ENCODE measurements at regions of chr7 and their contacts with region 1.

Region 1: DNA sequence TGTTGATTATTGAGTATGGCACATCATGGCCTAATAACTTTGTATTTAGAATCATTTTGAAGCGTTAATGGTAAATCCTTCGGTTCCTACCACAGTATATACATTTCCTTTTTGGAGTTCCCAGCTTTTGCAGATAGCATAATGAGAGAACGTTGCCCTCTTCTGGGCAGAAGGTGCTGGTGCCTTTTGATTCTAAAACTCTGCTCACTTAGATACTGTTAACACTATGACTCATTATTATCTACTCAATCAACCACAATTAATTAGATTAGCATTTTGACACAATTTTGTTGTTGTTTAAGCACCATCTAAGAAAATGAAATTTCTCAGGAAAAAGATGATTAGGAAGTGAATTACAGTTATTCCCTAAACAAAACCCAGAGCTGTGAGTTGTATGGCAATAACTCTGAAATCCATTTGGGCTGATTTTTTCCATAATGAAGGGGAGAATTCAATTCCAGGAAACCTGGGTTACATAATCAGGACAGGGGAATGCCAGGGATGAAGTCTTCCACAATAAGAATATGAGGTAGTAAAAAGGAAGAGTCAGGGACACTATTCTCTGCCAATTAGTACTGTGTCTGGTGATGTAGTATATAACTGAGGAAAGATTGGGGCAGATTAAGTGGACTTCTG is 11.5 kb upstream of the DLD start:
- DNase-seq: peak; percentile 71
- H3K4me3 Mint-ChIP-seq: no peak overlapping the region
- H3K27ac Mint-ChIP-seq: no peak overlapping the region
- H3K4me1 Mint-ChIP-seq: no peaks in the 10 kb centered on the region
- H3K27me3 Mint-ChIP-seq: peaks cover 33% of the 10 kb centered on the region
- CTCF ChIP-seq: peak; percentile 54

Region 2: DNA sequence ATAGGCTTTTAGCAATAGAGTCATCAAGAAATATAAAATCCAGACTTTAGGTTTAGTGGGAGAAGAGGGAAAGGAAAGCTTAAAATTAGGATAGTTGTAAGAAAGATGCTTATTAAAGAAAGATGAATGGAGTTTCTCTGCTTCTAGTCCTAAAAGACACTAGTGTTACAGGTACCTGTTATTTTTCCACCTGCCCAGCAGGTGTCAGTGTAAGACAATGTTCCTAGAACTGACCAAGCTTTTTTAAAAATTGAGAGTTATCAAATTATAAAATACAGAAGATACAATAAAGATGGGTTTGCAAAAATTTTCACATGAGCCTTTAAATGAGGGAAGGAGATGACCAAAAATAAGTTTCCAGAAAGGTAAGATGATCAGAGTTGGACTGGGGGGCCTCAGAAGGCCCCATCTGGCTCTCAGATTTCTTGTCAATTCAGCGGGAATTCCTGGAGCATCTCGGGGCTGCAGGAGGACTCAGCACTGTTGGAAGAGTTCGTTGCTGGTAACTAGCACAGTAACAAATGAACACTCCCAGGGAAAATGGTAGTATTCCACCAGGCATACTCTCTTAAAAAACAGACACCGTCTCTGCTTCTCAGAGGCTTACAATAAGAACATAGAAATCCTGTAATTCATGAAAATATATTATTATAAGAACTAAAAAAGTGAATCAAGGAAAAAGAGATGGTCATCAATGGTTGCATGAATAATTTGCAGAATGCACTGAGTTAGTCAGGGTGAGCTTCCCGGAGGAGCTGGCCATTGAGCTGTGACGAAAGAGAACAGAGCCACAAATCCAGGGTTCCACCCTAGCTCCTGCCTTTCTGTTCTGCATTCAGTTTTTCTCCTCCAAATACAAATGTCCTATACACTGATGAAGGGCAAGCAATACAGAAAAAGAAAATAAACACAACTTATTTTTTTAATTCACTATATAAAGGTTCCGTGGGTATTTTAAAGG is 1086.2 kb before region 1 on chr7:
- CTCF ChIA-PET with region 1: interaction called, 5 read pairs
- POLR2A ChIA-PET with region 1: no interaction called
- intact Hi-C with region 1: loop called (anchors 5 kb)
- DNase-seq: peak; percentile 54
- H3K4me3 Mint-ChIP-seq: no peak overlapping the region
- H3K27ac Mint-ChIP-seq: no peak overlapping the region
- H3K4me1 Mint-ChIP-seq: no peaks in the 10 kb centered on the region
- H3K27me3 Mint-ChIP-seq: peaks cover 42% of the 10 kb centered on the region
- CTCF ChIP-seq: peak; percentile 77

Region 3: GRCh38 chr7:107150375-107151073 is 729.0 kb before region 1 on chr7:
- CTCF ChIA-PET with region 1: interaction called, 5 read pairs
- POLR2A ChIA-PET with region 1: no interaction called
- intact Hi-C with region 1: loop called (anchors 2 kb)
- DNase-seq: peak; percentile 71
- H3K4me3 Mint-ChIP-seq: no peak overlapping the region
- H3K27ac Mint-ChIP-seq: no peak overlapping the region
- H3K4me1 Mint-ChIP-seq: peaks cover 12% of the 10 kb centered on the region
- H3K27me3 Mint-ChIP-seq: no peaks in the 10 kb centered on the region
- CTCF ChIP-seq: peak; percentile 59

Region 4: DNA sequence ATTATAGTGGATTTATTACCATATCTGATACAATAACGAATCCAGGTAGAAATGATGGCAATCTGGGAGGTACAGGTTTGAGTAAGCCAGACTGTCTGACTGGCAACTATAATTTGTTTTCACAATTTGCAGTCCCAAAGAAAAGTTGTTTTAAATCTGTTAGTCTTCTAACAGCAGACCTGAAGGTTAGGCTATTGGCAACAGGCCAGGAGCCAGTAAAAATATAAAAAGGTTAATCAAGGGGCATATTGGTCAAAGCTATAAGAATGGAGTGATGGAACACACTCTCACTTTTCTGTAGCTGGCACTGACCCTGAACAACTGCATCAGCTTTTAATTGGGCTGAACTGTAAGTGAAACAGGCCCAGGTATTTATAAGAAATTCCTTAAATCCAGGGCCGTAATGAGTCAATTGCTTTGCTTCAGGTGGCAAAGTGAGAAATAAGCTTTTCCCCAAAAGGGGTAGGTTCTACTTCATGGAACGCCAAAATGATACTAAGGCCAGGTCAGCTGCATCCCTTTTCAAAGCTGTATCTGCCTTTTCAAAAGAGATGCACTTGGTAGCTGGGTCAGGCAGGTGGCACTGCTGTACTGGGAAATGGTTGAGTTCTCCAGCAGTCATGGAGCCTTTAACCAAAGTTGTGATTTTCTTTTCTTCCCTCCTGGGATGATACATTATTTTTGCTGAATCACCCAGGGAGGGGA is 416.6 kb before region 1 on chr7:
- CTCF ChIA-PET with region 1: interaction called, 31 read pairs
- POLR2A ChIA-PET with region 1: interaction called, 6 read pairs
- intact Hi-C with region 1: loop called (anchors 1 kb)
- DNase-seq: peak; percentile 78
- H3K4me3 Mint-ChIP-seq: no peak overlapping the region
- H3K27ac Mint-ChIP-seq: no peak overlapping the region
- H3K4me1 Mint-ChIP-seq: peaks cover 5% of the 10 kb centered on the region
- H3K27me3 Mint-ChIP-seq: no peaks in the 10 kb centered on the region
- CTCF ChIP-seq: peak; percentile 82

Region 5: GRCh38 chr7:107743567-107744344 is 135.8 kb before region 1 on chr7 and contains the start of gene CBLL1:
- CTCF ChIA-PET with region 1: interaction called, 227 read pairs
- POLR2A ChIA-PET with region 1: interaction called, 93 read pairs
- intact Hi-C with region 1: loop called (anchors 1 kb)
- DNase-seq: peak; percentile 92
- H3K4me3 Mint-ChIP-seq: peak within 1 kb of the TSS; percentile 94
- H3K27ac Mint-ChIP-seq: peak within 1 kb of the TSS; percentile 97
- H3K4me1 Mint-ChIP-seq: peaks cover 21% of the 10 kb centered on the region
- H3K27me3 Mint-ChIP-seq: no peaks in the 10 kb centered on the region
- CTCF ChIP-seq: peak; percentile 58
- total RNA-seq, gene CBLL1: 34.5 and 39.7 TPM in 2 replicates

Region 6: GRCh38 chr7:107890962-107891635 is 11.6 kb after region 1 on chr7 and contains the start of gene DLD:
- CTCF ChIA-PET with region 1: interaction called, 35 read pairs
- POLR2A ChIA-PET with region 1: interaction called, 7 read pairs
- intact Hi-C with region 1: no loop called
- DNase-seq: peak; percentile 88
- H3K4me3 Mint-ChIP-seq: peak within 1 kb of the TSS; percentile 86
- H3K27ac Mint-ChIP-seq: peak within 1 kb of the TSS; percentile 95
- H3K4me1 Mint-ChIP-seq: peaks cover 26% of the 10 kb centered on the region
- H3K27me3 Mint-ChIP-seq: peaks cover 2% of the 10 kb centered on the region
- CTCF ChIP-seq: no peak
- total RNA-seq, gene DLD: 83.0 and 85.7 TPM in 2 replicates

Region 7: DNA sequence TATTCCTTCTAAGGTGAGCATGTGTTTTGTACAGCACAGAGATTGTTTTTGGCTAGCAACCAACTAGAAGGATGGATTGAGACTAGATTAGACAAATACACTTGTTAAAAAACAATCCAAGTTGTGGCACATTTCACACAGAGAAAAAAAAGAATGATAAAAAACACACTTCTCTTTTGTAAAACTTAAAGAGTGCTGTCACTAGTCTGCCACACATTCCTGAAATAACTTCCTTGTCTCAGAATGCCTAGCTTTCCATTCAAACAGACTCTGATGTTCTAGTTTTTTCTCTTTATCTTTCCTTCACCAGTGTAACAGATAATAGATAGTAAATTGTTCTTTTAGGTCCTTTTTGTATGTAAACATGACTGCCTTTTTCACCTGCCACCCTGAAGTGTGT is 22.9 kb after region 1 on chr7:
- CTCF ChIA-PET with region 1: no interaction called
- POLR2A ChIA-PET with region 1: no interaction called
- intact Hi-C with region 1: no loop called
- DNase-seq: no peak
- H3K4me3 Mint-ChIP-seq: no peak overlapping the region
- H3K27ac Mint-ChIP-seq: no peak overlapping the region
- H3K4me1 Mint-ChIP-seq: peaks cover 10% of the 10 kb centered on the region
- H3K27me3 Mint-ChIP-seq: no peaks in the 10 kb centered on the region
- CTCF ChIP-seq: no peak

Measured in MCF 10A (cell line).